ENCODE measurements at regions of chr1 and their contacts with region 1.

Region 1: GRCh38 chr1:147242439-147243227 is at the start of gene CHD1L:
- DNase-seq: peak; percentile 69
- H3K4me3 ChIP-seq: peak within 1 kb of the TSS; percentile 91
- CTCF ChIP-seq: peak; percentile 92

Region 2: DNA sequence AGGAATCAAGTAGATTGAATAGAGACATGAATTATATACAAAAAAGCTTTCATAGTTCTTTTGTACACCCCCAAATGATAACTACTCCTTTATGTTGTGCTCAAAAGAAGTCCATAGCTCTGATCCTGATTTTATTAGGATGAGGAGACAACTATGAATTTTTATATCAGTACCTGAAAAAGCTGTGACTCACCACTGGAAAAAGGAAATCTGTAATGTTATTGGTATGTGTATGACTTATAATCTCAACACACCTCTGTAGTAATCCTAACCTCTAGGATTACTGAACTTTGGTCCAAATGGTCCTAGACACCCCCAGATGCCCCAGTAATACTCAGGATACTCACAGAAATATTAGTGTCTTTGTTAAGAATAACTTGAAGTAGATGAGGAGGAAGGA is 80.5 kb before region 1 on chr1:
- CTCF ChIA-PET with region 1: interaction called, 77 read pairs
- POLR2A ChIA-PET with region 1: no interaction called
- DNase-seq: no peak
- H3K4me3 ChIP-seq: no peak overlapping the region
- CTCF ChIP-seq: no peak

Region 3: GRCh38 chr1:147172168-147172992 is 70.3 kb before region 1 on chr1 and contains the start of gene PRKAB2:
- CTCF ChIA-PET with region 1: interaction called, 77 read pairs
- POLR2A ChIA-PET with region 1: interaction called, 6 read pairs
- DNase-seq: peak; percentile 89
- H3K4me3 ChIP-seq: peak within 1 kb of the TSS; percentile 88
- CTCF ChIP-seq: peak; percentile 92

Region 4: GRCh38 chr1:147177611-147178380 is 64.8 kb before region 1 on chr1:
- CTCF ChIA-PET with region 1: interaction called, 77 read pairs
- POLR2A ChIA-PET with region 1: interaction called, 5 read pairs
- DNase-seq: no peak
- H3K4me3 ChIP-seq: peak overlapping the region; percentile 23
- CTCF ChIP-seq: no peak

Region 5: GRCh38 chr1:147273409-147274336 is 31.0 kb after region 1 on chr1:
- CTCF ChIA-PET with region 1: interaction called, 19 read pairs
- POLR2A ChIA-PET with region 1: no interaction called
- DNase-seq: peak; percentile 42
- H3K4me3 ChIP-seq: no peak overlapping the region; the same call in 1 of the 2 replicates
- CTCF ChIP-seq: peak; percentile 26

Region 6: GRCh38 chr1:147292631-147293251 is 50.1 kb after region 1 on chr1:
- CTCF ChIA-PET with region 1: interaction called, 18 read pairs
- POLR2A ChIA-PET with region 1: interaction called, 6 read pairs
- DNase-seq: peak; percentile 96
- H3K4me3 ChIP-seq: peak overlapping the region; percentile 13
- CTCF ChIP-seq: no peak

Region 7: DNA sequence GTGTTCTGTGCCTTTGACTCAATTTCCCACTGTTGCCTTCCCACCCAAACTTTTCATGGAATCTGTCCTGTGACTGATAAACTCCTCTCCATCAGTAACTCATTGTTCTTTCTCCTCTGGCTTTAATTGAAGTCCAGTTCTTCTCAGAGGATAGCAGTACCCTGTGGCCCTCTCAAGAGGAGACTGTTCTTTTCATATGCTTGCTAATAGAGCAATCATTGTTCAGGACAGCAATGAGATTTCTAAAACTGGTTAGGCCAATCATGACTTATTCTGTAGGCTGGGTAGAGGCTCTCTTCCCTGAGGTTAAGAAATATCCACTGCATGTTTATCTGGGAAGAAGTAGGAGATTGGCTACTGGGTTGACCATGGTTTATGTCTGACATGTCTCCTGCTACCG is 98.6 kb after region 1 on chr1:
- CTCF ChIA-PET with region 1: no interaction called
- POLR2A ChIA-PET with region 1: no interaction called
- DNase-seq: no peak
- H3K4me3 ChIP-seq: no peak overlapping the region
- CTCF ChIP-seq: no peak

Region 8: GRCh38 chr1:147389532-147390524 is 147.2 kb after region 1 on chr1:
- CTCF ChIA-PET with region 1: interaction called, 23 read pairs
- POLR2A ChIA-PET with region 1: no interaction called
- DNase-seq: no peak
- H3K4me3 ChIP-seq: no peak overlapping the region
- CTCF ChIP-seq: peak; percentile 71

Measured in AG04449 (cell line).